ENCODE measurements at regions of chr20 and their contacts with region 1.

Region 1: DNA sequence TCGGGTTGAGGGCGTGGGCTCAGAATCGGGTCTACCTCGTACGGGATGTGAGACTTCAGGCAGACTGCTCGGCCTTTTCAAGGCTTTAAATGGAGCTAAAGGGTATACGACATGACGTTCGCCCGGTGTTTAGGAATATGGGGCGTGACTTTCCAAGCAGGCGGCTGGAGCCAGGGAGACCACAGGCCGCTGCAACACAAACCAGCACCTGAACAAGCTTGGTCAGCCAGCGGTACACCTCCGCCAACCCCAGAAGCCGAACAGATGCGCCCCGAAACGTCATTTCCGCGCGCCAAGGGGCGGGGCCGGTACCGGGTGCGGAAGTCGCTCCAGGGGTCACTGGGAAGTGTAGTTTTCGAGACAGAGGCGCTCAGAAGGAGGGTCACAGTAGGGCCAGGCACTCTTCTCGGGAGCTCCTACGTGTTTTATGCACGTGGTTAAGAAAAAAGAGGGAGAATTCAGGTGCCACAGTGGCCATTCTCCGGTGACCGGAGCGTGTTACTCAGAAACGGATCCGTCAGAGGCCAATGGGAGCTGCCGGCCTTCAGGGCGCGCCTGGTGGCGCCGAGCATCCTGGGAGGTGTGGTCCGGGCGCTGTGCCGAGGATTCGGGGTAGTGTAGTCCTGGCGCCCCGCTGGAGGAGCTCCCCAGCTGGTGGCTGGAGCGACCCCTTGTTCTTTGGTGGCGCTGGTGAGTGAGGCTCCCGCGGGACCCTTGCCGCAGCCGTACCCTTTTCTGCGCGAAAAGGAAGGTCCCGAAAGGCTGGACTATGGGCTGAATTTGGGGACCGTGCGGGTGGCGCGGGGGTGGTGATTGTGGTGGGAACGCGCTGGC is at the start of gene ZNF133:
- DNase-seq: peak; percentile 97
- H3K4me3 ChIP-seq: peak within 1 kb of the TSS; percentile 78 to 90 (median 84)
- H3K27ac ChIP-seq: peak within 1 kb of the TSS; percentile 89 to 94 (median 90)
- H3K4me1 ChIP-seq: peaks cover 0 to 18% (median 9%) of the 10 kb centered on the region in 4 donors
- H3K27me3 ChIP-seq: no peaks in the 10 kb centered on the region
- CTCF ChIP-seq: no peak
- EP300 ChIP-seq: no peak
- POLR2A ChIP-seq: peak; percentile 57 to 74
- total RNA-seq, gene ZNF133: 16.2 to 20.3 (median 18.4) TPM

Region 2: DNA sequence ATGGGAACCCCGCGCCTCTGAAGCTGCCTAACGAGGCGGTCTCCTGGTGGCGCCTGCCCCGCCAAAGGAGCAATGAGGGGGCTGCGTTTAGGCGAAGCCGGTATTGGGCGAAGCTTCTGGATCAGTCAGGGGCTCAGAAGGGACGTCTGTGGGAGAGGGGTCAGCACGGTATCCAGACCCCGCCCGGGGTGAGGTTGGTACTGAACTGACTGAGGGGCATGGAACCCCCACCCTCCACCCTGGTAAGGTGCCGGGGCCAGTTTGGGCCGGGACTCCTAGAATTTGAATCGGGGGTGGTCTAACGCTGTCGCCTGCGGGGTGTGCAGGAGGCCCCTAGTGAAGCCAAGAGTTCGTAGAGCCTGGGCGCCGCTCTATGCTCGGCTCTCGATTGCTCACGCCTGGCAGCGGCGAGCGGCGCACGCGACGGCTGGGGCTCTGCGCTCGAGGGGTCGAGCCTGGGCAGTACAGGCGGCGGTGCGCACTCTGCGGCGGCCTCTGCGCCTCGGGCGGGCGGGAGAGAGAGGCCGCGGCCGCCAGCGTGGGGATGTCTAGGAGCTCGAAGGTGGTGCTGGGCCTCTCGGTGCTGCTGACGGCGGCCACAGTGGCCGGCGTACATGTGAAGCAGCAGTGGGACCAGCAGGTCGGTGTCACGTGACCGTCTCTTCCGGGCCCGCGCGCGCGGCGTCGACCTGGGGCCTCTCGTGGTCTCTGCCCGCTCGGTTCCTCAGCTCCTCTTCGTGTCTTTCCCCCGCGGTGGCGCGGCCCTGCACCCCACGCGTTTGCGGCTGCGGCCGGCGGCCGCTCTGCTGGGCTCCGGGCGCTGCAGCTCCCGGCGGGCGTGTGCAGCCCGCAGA is 150.5 kb before region 1 on chr20 and contains the starts of genes KAT14 and PET117:
- intact Hi-C with region 1: loop called (anchors 5 kb)
- DNase-seq: peak; percentile 93
- H3K4me3 ChIP-seq: peak within 1 kb of the TSS; percentile 62 to 83 (median 78)
- H3K27ac ChIP-seq: peak within 1 kb of the TSS; percentile 91 to 93 (median 92)
- H3K4me1 ChIP-seq: peaks cover 0 to 37% (median 30%) of the 10 kb centered on the region in 4 donors
- H3K27me3 ChIP-seq: no peaks in the 10 kb centered on the region
- CTCF ChIP-seq: no peak
- EP300 ChIP-seq: no peak
- POLR2A ChIP-seq: peak; percentile 38 to 47
- total RNA-seq, gene KAT14: 12.6 to 21.7 (median 17.9) TPM
- total RNA-seq, gene PET117: 7.8 to 18.8 (median 16.9) TPM

Region 3: DNA sequence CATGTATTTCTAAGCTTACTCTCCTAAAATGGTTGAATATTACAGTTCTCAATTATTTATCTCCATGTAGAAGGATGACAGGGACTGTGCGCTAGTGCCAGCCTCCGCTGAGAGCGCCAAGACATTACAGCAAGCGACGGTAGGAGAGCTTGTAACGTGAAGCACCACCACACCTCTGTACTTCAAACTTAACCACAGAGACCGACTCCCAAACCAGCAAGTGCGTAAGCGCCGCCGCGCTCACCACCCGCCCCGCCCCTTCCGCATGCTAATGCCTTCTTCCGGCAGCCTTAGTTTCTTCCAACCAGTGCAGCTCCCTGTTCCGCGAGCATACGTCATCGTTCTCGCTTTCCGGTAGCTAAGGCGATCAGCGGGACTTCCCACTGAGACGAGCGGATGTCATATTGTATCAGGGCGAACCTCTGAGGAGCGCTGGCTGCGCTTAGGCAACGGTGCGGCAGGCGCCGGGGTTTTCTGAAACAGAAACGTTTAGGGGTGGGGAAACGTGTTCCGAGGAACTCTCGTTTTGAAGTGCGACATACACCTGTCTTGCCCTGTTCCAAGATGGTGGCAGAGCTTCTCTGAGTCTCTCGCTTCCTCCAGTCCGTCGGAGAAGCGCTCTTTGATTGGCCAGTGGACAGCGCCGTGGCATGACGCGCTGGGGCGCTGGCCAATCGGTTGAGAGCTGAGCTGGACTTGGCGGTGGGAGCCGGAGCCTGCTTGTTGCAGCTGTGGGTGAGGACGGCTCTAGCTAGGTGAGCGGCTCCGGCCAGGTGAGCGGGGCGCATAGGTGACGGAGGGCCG is 219.3 kb after region 1 on chr20 and contains the start of gene SEC23B:
- intact Hi-C with region 1: loop called (anchors 5 kb)
- DNase-seq: peak; percentile 99
- H3K4me3 ChIP-seq: peak within 1 kb of the TSS; percentile 54 to 88 (median 76)
- H3K27ac ChIP-seq: peak within 1 kb of the TSS; percentile 90 to 95 (median 92)
- H3K4me1 ChIP-seq: peaks cover 0 to 18% (median 16%) of the 10 kb centered on the region in 4 donors
- H3K27me3 ChIP-seq: peaks cover 0 to 17% (median 0%) of the 10 kb centered on the region in 3 donors
- CTCF ChIP-seq: no peak
- EP300 ChIP-seq: peak in 1 of 4 donors; percentile 37
- POLR2A ChIP-seq: peak; percentile 86 to 89
- total RNA-seq, gene SEC23B: 10.5 to 14.2 (median 13.5) TPM

Region 4: GRCh38 chr20:18566892-18567742 is 279.0 kb after region 1 on chr20 and contains the start of gene SMIM26:
- intact Hi-C with region 1: loop called (anchors 5 kb)
- DNase-seq: peak; percentile 97
- H3K4me3 ChIP-seq: peak within 1 kb of the TSS; percentile 56 to 68 (median 66)
- H3K27ac ChIP-seq: peak within 1 kb of the TSS; percentile 85 to 88 (median 87)
- H3K4me1 ChIP-seq: peaks cover 0 to 14% (median 12%) of the 10 kb centered on the region in 4 donors
- H3K27me3 ChIP-seq: no peaks in the 10 kb centered on the region
- CTCF ChIP-seq: no peak
- EP300 ChIP-seq: no peak
- POLR2A ChIP-seq: peak; percentile 40 to 53
- total RNA-seq, gene SMIM26: 140 to 235 (median 204) TPM

Measured in sigmoid colon (tissue), 7 donors.